ENCODE measurements at regions of chr11 and their contacts with region 1.

Region 1: GRCh38 chr11:61361686-61362541 is at the starts of genes CYB561A3 and TMEM138:
- DNase-seq: peak; percentile 77
- H3K4me3 ChIP-seq: peak within 1 kb of the TSS; percentile 77
- CTCF ChIP-seq: no peak

Region 2: GRCh38 chr11:61325649-61326414 is 36.1 kb before region 1 on chr11:
- in situ Hi-C with region 1: loop called (anchors 5 kb)
- DNase-seq: no peak
- H3K4me3 ChIP-seq: no peak overlapping the region
- CTCF ChIP-seq: no peak